ENCODE measurements at regions of chr21 and their contacts with region 1.

Region 1: DNA sequence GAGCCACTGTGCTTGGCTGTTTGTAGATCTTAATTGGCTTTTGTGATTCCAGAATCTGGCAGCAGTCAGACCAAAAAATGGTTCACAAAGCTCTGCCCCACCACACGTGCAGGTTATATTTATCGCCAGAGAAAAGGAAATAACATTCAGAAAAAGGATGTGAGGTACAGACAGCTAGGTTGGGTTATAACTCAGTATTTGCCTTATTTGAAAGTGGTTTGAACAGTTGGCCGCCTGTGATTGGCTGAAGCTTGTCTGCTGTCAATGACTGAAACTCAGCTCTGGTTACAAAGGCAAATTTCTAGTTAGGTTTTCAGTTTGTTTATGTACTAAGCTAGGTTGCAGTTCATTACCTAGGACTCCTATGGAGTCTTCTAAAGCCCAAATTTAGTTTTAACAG is 9.6 kb downstream of the SH3BGR start:
- DNase-seq: no peak
- H3K4me3 ChIP-seq: no peak overlapping the region
- H3K27ac ChIP-seq: no peak overlapping the region
- H3K4me1 ChIP-seq: no peaks in the 10 kb centered on the region
- H3K27me3 ChIP-seq: no peaks in the 10 kb centered on the region
- CTCF ChIP-seq: no peak

Region 2: GRCh38 chr21:39362733-39363132 is 98.7 kb before region 1 on chr21:
- CTCF ChIA-PET with region 1: no interaction called
- POLR2A ChIA-PET with region 1: no interaction called
- intact Hi-C with region 1: no loop called
- DNase-seq: no peak
- H3K4me3 ChIP-seq: no peak overlapping the region
- H3K27ac ChIP-seq: no peak overlapping the region
- H3K4me1 ChIP-seq: no peaks in the 10 kb centered on the region
- H3K27me3 ChIP-seq: no peaks in the 10 kb centered on the region
- CTCF ChIP-seq: no peak

Region 3: GRCh38 chr21:39397646-39398385 is 63.6 kb before region 1 on chr21:
- CTCF ChIA-PET with region 1: no interaction called
- POLR2A ChIA-PET with region 1: interaction called, 14 read pairs
- intact Hi-C with region 1: no loop called
- DNase-seq: no peak
- H3K4me3 ChIP-seq: no peak overlapping the region
- H3K27ac ChIP-seq: no peak overlapping the region
- H3K4me1 ChIP-seq: no peaks in the 10 kb centered on the region
- H3K27me3 ChIP-seq: no peaks in the 10 kb centered on the region
- CTCF ChIP-seq: no peak

Region 4: GRCh38 chr21:39499156-39499555 is 37.7 kb after region 1 on chr21:
- CTCF ChIA-PET with region 1: no interaction called
- POLR2A ChIA-PET with region 1: no interaction called
- intact Hi-C with region 1: no loop called
- DNase-seq: no peak
- H3K4me3 ChIP-seq: no peak overlapping the region
- H3K27ac ChIP-seq: no peak overlapping the region
- H3K4me1 ChIP-seq: no peaks in the 10 kb centered on the region
- H3K27me3 ChIP-seq: no peaks in the 10 kb centered on the region
- CTCF ChIP-seq: no peak

Region 5: DNA sequence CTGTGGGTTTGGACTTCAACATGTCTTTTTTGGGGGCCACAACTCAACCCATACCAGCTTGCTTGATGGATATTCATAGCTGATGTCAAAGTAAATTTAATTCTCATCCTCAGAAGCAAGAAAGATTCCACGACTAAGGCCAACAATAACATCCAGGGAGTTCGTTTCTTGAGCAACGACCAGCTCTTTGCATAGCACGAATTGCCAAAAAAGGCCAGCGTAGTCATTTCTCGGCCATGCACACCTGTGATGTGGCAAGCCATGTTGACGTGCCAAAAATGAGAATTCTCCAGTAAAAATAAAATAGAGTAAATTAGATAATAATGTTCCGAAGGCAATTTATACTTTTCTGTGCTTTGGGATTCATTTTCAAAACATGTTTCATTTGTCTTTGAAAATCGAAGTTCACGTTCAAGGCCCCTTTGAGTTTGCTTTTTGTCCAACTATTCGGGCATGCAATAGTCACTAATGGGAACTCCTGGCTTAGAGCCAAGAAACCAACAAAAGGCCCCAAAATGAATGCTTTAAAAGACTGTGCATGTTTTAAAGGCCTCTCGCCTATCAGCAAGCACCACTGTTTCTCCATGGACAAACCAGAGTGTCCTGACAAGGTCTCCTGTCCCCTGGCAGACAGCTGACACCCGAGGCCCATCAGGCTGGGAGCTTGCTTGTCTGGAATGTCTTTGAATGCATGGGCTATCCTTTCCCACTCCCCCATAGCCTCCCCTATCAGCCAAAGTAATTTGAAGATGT is 269.2 kb after region 1 on chr21:
- CTCF ChIA-PET with region 1: no interaction called
- POLR2A ChIA-PET with region 1: no interaction called
- intact Hi-C with region 1: no loop called
- DNase-seq: no peak
- H3K4me3 ChIP-seq: no peak overlapping the region
- H3K27ac ChIP-seq: no peak overlapping the region
- H3K4me1 ChIP-seq: no peaks in the 10 kb centered on the region
- H3K27me3 ChIP-seq: no peaks in the 10 kb centered on the region
- CTCF ChIP-seq: no peak

Region 6: GRCh38 chr21:39796466-39796865 is 335.0 kb after region 1 on chr21:
- CTCF ChIA-PET with region 1: no interaction called
- POLR2A ChIA-PET with region 1: no interaction called
- intact Hi-C with region 1: no loop called
- DNase-seq: no peak
- H3K4me3 ChIP-seq: no peak overlapping the region
- H3K27ac ChIP-seq: no peak overlapping the region
- H3K4me1 ChIP-seq: no peaks in the 10 kb centered on the region
- H3K27me3 ChIP-seq: peaks cover 12% of the 10 kb centered on the region
- CTCF ChIP-seq: no peak